Calu3 (cell line): ENCODE measurements at regions of chr4 and their contacts with region 1.

Region 1: DNA sequence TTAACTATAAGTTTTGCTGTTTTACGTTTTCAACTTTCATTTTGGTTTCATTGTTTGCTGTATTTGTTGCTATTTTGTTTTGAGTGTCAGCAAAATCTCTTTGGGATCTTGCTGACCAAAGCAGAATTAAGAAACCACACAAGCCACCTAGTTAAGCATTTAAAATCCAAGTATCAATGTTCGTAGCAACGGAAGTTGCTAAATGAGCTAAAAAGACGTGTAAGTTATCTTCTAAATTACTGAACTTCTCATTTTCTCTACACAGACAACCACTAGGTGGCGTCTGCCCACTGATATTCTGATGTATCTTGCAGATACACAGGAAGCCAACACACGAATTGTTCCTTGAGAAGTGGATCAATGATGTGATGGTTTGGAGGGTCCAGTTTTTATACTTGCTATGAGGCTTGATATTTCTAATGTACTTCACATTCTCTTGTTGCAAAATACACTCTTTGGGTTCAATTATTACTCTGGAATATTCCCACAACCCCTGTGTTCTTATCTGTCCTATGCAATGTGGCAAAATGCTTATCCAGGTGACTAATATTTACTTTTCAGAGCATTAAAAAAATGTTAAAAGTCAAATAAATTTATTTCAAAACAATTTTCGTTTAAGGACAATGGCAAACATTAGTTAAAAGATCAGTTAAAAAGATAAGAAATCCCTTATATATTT is 250.5 kb downstream of the TECRL start:
- DNase-seq: peak; percentile 52
- H3K4me3 Mint-ChIP-seq: peak overlapping the region; percentile 56
- H3K27ac Mint-ChIP-seq: no peak overlapping the region
- H3K4me1 Mint-ChIP-seq: no peaks in the 10 kb centered on the region
- H3K27me3 Mint-ChIP-seq: no peaks in the 10 kb centered on the region
- CTCF ChIP-seq: peak; percentile 50

Region 2: DNA sequence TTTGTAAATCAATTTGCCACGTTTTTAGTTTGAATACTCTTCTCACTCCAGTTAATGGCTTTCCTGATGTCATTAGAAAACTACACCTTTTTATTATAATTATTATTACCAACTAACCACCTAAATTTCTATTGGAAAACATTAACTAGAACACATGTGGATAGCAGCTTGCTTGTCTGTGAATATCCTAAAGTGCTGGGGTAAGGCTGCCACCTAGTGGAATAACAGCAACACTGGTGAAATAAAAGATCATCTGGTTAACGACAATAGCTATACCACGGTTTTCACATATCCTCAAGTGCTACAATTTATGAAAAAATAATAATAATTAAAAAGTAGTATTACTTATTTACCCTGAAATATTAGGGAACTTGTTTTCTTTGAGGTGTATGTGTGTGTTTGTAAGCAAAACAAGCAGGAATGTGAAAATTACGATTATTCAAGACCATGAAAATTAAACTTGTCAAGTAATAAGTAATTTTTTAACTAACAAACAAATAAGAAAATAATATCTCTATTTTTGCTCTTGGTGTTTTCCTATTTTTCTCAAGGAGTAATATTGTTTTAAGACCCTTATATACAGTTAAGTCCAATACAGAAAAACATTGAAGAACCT is 380.6 kb after region 1 on chr4:
- CTCF ChIA-PET with region 1: interaction called, 6 read pairs
- intact Hi-C with region 1: loop called (anchors 1 kb)
- DNase-seq: peak; percentile 41
- H3K4me3 Mint-ChIP-seq: no peak overlapping the region
- H3K27ac Mint-ChIP-seq: no peak overlapping the region
- H3K4me1 Mint-ChIP-seq: no peaks in the 10 kb centered on the region
- H3K27me3 Mint-ChIP-seq: no peaks in the 10 kb centered on the region
- CTCF ChIP-seq: peak; percentile 31

Region 3: DNA sequence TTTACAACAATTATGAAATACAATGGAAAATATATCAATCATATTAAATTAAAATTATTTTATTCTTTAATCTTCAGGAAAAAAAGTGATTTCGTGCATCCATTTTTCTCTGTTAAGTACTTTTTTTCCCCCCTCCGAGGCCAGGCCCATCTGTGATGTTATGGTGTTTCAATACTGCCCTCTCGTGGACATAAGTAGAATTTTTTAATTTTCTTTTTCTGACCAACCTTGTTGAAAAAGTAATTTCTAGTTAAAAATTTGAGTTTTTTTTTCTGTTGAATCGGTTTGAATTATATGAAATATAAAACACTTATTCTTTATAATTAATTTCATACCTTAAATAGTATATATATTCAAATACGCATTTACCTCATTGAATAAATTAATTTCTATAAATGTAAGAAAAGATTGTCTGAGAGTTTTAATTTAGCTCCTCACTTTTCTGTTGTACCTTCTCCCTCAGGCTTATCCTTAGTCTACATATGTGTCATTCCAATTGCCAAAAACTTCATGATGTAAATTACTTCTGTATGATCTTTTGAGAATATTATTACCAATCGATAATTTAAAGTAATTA is 426.3 kb after region 1 on chr4:
- CTCF ChIA-PET with region 1: no interaction called
- intact Hi-C with region 1: loop called (anchors 5 kb)
- DNase-seq: no peak
- H3K4me3 Mint-ChIP-seq: no peak overlapping the region
- H3K27ac Mint-ChIP-seq: no peak overlapping the region
- H3K4me1 Mint-ChIP-seq: no peaks in the 10 kb centered on the region
- H3K27me3 Mint-ChIP-seq: no peaks in the 10 kb centered on the region
- CTCF ChIP-seq: peak; percentile 47